T-cell (primary cell): ENCODE measurements at regions of chr2 and their contacts with region 1.

Region 1: DNA sequence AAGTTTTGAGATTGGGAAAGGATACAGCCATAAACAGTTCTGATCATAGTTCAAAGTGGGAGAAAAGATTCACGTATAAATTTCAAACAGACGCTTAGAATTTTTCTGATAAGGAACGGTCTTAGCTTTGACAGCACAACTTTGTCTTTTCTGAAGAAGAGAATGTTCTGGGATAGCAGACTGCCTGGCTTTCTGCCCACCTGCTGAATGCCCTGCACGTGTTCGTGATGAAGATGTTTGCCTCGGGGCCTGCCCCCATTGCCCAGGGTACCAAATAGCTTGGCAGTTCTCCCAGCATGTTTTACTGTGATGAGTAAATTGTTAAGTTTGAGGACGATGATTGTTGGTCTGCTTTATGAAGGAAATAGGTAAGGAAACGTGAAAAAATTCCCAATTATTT is 4.6 kb downstream of the MRPL33 start:
- DNase-seq: no peak
- ATAC-seq: no peak
- H3K4me3 ChIP-seq: no peak overlapping the region
- H3K4me3 Mint-ChIP-seq: no peak overlapping the region
- H3K27ac ChIP-seq: no peak overlapping the region
- H3K27ac Mint-ChIP-seq: peak overlapping the region in 1 of 2 donors; percentile 11
- H3K4me1 ChIP-seq: peaks cover 12% of the 10 kb centered on the region in 2 experiments
- H3K4me1 Mint-ChIP-seq: peaks cover 58 to 61% (median 59%) of the 10 kb centered on the region in 3 donors
- H3K27me3 ChIP-seq: no peaks in the 10 kb centered on the region
- H3K27me3 Mint-ChIP-seq: no peaks in the 10 kb centered on the region

Region 2: GRCh38 chr2:27754138-27754588 is 21.9 kb before region 1 on chr2:
- CTCF ChIA-PET with region 1: no interaction called
- POLR2A ChIA-PET with region 1: no interaction called
- DNase-seq: peak in 33 of 35 experiments; percentile 16 to 70 (median 55)
- ATAC-seq: peak; percentile 55 to 76 (median 67)
- H3K4me3 ChIP-seq: no peak overlapping the region
- H3K4me3 Mint-ChIP-seq: no peak overlapping the region
- H3K27ac ChIP-seq: no peak overlapping the region
- H3K27ac Mint-ChIP-seq: no peak overlapping the region
- H3K4me1 ChIP-seq: no peaks in the 10 kb centered on the region
- H3K4me1 Mint-ChIP-seq: no peaks in the 10 kb centered on the region
- H3K27me3 ChIP-seq: peaks cover 0 to 23% of the 10 kb centered on the region in 2 experiments
- H3K27me3 Mint-ChIP-seq: peaks cover 3 to 11% of the 10 kb centered on the region in 2 donors

Region 3: GRCh38 chr2:28117104-28117596 is 341.1 kb after region 1 on chr2:
- CTCF ChIA-PET with region 1: no interaction called
- POLR2A ChIA-PET with region 1: interaction called in 1 of 2 experiments, 11 read pairs
- DNase-seq: no peak
- ATAC-seq: no peak
- H3K4me3 ChIP-seq: no peak overlapping the region
- H3K4me3 Mint-ChIP-seq: no peak overlapping the region
- H3K27ac ChIP-seq: no peak overlapping the region
- H3K27ac Mint-ChIP-seq: no peak overlapping the region
- H3K4me1 ChIP-seq: no peaks in the 10 kb centered on the region
- H3K4me1 Mint-ChIP-seq: peaks cover 0 to 4% (median 2%) of the 10 kb centered on the region in 3 donors
- H3K27me3 ChIP-seq: no peaks in the 10 kb centered on the region
- H3K27me3 Mint-ChIP-seq: no peaks in the 10 kb centered on the region